Activated CD4-positive, alpha-beta T cell treated with anti-CD3 and anti-CD28 coated beads for 36 hours (primary cell): ENCODE measurements at regions of chr7 and their contacts with region 1.

Region 1: DNA sequence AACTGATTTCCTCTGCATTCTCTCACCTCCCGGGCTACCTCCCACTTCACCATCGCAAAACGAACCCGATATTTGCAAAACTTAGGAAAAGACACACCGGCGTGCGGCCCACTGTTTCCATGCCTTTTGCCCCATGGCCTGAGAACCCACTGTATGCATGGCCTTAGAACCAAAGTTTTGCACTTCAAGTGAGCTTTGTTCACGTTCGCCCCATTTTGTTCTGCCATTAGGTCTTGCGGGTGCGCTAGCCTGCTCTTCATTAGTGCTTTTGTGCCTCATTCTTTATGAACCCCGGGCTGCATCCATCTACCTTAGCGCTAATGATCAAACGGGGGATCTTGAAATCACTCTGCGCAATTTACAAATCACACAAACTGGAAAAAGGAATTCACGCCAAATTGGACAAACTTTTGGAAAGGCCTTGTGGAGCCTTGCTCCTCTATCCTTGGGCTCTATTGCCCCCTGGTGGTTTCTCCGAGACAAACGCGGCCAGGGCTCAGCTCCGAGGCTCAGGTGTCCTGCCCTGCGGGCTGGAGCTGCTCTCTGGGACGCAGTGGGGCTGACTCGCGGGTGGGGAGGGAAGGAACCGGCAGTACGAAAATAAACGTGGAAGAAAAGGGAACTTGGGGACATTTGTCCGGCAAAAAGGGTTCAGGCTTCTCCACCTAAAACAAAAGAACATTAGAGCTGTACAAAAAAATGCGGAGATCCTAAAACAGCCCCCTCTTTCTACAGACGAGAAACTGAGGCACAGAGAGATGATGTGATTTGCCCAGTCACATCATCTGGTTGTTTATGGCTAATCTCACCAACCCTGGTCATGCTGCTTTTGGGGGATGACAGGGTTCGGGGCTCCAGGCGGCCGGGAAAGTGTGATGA is 300.4 kb upstream of the NFE2L3 start:
- DNase-seq: peak; percentile 84
- ATAC-seq: peak; percentile 47
- H3K4me3 Mint-ChIP-seq: peak overlapping the region; percentile 49
- H3K27ac Mint-ChIP-seq: peak overlapping the region; percentile 16
- H3K4me1 Mint-ChIP-seq: peaks cover 18% of the 10 kb centered on the region
- H3K27me3 Mint-ChIP-seq: peaks cover 48% of the 10 kb centered on the region

Region 2: DNA sequence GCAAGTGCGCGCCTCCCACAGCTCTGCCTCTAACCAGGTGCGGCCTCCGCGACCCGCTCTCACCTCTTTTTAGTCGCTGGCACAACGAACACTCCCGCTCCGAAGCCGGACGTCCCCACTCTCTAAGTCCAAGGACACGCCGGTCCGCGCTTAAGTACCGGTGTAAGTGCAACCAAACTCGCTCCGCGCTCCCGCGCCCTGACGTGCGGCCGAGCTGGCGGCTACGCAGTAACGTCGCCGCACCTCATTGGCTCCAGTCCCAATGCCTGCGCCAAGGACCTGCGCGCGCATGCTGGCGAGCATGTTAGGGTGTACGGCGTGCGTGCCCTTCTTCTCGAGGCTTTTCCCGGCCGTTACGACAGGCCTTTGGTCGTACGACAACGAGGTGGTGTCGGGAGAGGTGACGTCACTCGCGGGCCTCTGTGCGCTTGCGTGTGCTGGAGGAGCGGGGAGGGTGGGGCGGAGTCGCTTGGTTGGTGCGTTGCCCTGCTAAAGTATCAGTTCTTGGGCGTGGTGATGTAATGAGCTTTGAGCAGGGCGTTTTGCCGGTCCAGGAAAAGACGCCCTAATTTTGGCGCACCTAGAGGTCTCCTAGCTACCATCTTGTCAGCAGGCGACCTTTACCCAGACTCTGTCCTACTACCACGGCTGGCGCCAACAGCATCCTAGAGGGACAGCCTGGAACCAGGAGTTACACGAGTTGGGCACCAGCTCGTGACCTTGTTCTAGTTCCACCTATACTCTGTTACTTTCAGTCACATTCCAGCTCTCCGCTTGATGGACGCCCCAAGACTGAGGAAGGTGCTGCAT is 726.2 kb before region 1 on chr7 and contains the start of gene CYCS:
- CTCF ChIA-PET with region 1: no interaction called
- POLR2A ChIA-PET with region 1: no interaction called
- intact Hi-C with region 1: loop called in 1 of 2 experiments (anchors 10 kb)
- DNase-seq: peak; percentile 100
- ATAC-seq: peak; percentile 97
- H3K4me3 Mint-ChIP-seq: peak within 1 kb of the TSS; percentile 97
- H3K27ac Mint-ChIP-seq: peak within 1 kb of the TSS; percentile 98
- H3K4me1 Mint-ChIP-seq: peaks cover 27% of the 10 kb centered on the region
- H3K27me3 Mint-ChIP-seq: no peaks in the 10 kb centered on the region
- total RNA-seq, gene CYCS: 222 to 237 TPM

Region 3: GRCh38 chr7:25389489-25390106 is 462.0 kb before region 1 on chr7:
- CTCF ChIA-PET with region 1: interaction called, 3 read pairs
- POLR2A ChIA-PET with region 1: no interaction called
- intact Hi-C with region 1: loop called (anchors 1 to 2 kb)
- DNase-seq: peak; percentile 19
- ATAC-seq: no peak
- H3K4me3 Mint-ChIP-seq: no peak overlapping the region
- H3K27ac Mint-ChIP-seq: no peak overlapping the region
- H3K4me1 Mint-ChIP-seq: no peaks in the 10 kb centered on the region
- H3K27me3 Mint-ChIP-seq: no peaks in the 10 kb centered on the region

Region 4: GRCh38 chr7:25720427-25720826 is 131.1 kb before region 1 on chr7:
- CTCF ChIA-PET with region 1: no interaction called
- POLR2A ChIA-PET with region 1: no interaction called
- intact Hi-C with region 1: loop called (anchors 5 kb)
- DNase-seq: no peak
- ATAC-seq: no peak
- H3K4me3 Mint-ChIP-seq: no peak overlapping the region
- H3K27ac Mint-ChIP-seq: no peak overlapping the region
- H3K4me1 Mint-ChIP-seq: no peaks in the 10 kb centered on the region
- H3K27me3 Mint-ChIP-seq: peaks cover 10% of the 10 kb centered on the region

Region 5: GRCh38 chr7:26291699-26292538 is 440.3 kb after region 1 on chr7 and contains the start of gene SNX10:
- CTCF ChIA-PET with region 1: no interaction called
- POLR2A ChIA-PET with region 1: no interaction called
- intact Hi-C with region 1: loop called in 1 of 2 experiments (anchors 5 kb)
- DNase-seq: peak; percentile 81
- ATAC-seq: peak; percentile 68
- H3K4me3 Mint-ChIP-seq: peak within 1 kb of the TSS; percentile 85
- H3K27ac Mint-ChIP-seq: peak within 1 kb of the TSS; percentile 84
- H3K4me1 Mint-ChIP-seq: peaks cover 33% of the 10 kb centered on the region
- H3K27me3 Mint-ChIP-seq: no peaks in the 10 kb centered on the region
- total RNA-seq, gene SNX10: 28.1 to 35.5 TPM

Region 6: GRCh38 chr7:27160546-27161213 is 1309.1 kb after region 1 on chr7:
- CTCF ChIA-PET with region 1: interaction called, 5 read pairs
- POLR2A ChIA-PET with region 1: no interaction called
- intact Hi-C with region 1: loop called in 1 of 2 experiments (anchors 5 kb)
- DNase-seq: peak; percentile 91
- ATAC-seq: peak; percentile 50
- H3K4me3 Mint-ChIP-seq: peak overlapping the region; percentile 62
- H3K27ac Mint-ChIP-seq: no peak overlapping the region
- H3K4me1 Mint-ChIP-seq: peaks cover 24% of the 10 kb centered on the region
- H3K27me3 Mint-ChIP-seq: peaks cover 74% of the 10 kb centered on the region